ENCODE measurements at regions of chr7 and their contacts with region 1.

Region 1: GRCh38 chr7:151759591-151760042 is 117.3 kb downstream of the PRKAG2 start:
- DNase-seq: peak; percentile 31 to 83
- ATAC-seq: peak; percentile 61 to 80 (median 76)
- H3K4me3 ChIP-seq: no peak overlapping the region
- H3K4me3 Mint-ChIP-seq: no peak overlapping the region
- H3K27ac ChIP-seq: no peak overlapping the region
- H3K27ac Mint-ChIP-seq: peak overlapping the region in 1 of 2 donors; percentile 16
- H3K4me1 ChIP-seq: peaks cover 11% of the 10 kb centered on the region
- H3K4me1 Mint-ChIP-seq: peaks cover 19 to 26% of the 10 kb centered on the region in 2 donors
- H3K27me3 ChIP-seq: no peaks in the 10 kb centered on the region
- H3K27me3 Mint-ChIP-seq: no peaks in the 10 kb centered on the region
- CTCF ChIP-seq: peak; percentile 77

Region 2: GRCh38 chr7:151570366-151570915 is 189.2 kb before region 1 on chr7:
- intact Hi-C with region 1: loop called (anchors 2 kb)
- DNase-seq: peak in 1 of 2 donors; percentile 41
- ATAC-seq: no peak
- H3K4me3 ChIP-seq: no peak overlapping the region
- H3K4me3 Mint-ChIP-seq: no peak overlapping the region
- H3K27ac ChIP-seq: no peak overlapping the region
- H3K27ac Mint-ChIP-seq: no peak overlapping the region
- H3K4me1 ChIP-seq: no peaks in the 10 kb centered on the region
- H3K4me1 Mint-ChIP-seq: no peaks in the 10 kb centered on the region
- H3K27me3 ChIP-seq: no peaks in the 10 kb centered on the region
- H3K27me3 Mint-ChIP-seq: no peaks in the 10 kb centered on the region
- CTCF ChIP-seq: peak; percentile 45